GM12878 (cell line): ENCODE measurements at regions of chr11 and their contacts with region 1.

Region 1: DNA sequence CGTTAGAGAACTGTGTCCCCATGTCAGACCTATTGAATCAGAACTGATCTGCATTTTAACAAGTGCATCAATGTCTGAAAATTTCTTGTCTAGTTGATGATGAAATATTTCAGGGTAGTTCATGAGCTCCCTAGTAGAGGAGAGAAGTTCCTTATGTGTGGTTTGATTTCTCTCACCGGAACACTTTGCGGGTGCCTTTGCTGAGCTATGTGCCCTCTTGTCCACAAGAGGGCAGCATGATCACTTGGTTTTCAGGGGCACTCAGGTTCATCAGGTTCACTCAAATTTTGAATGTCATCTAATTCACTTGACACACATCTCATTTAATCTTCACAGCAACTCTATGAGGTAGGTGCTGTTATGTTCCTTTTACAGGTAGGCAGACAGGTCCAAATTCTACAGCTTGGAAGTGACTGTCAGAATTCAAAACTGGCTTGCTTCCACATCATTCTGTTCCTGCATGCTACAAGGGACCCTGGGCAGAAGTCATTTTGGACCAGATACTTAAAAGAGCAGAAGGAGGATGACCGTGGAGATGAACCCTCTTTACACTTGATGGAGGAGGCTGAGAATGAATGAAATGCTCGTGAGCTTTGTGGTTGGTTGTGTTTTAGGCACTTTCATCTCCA is 55.6 kb downstream of the P4HA3 start:
- DNase-seq: no peak
- ATAC-seq: peak; percentile 80
- H3K4me3 ChIP-seq: no peak overlapping the region
- H3K27ac ChIP-seq: no peak overlapping the region
- H3K4me1 ChIP-seq: no peaks in the 10 kb centered on the region
- H3K27me3 ChIP-seq: no peaks in the 10 kb centered on the region
- CTCF ChIP-seq: peak; percentile 87 to 95 (median 89)
- EP300 ChIP-seq: no peak
- POLR2A ChIP-seq: no peak
- RAD21 ChIP-seq: peak; percentile 71

Region 2: DNA sequence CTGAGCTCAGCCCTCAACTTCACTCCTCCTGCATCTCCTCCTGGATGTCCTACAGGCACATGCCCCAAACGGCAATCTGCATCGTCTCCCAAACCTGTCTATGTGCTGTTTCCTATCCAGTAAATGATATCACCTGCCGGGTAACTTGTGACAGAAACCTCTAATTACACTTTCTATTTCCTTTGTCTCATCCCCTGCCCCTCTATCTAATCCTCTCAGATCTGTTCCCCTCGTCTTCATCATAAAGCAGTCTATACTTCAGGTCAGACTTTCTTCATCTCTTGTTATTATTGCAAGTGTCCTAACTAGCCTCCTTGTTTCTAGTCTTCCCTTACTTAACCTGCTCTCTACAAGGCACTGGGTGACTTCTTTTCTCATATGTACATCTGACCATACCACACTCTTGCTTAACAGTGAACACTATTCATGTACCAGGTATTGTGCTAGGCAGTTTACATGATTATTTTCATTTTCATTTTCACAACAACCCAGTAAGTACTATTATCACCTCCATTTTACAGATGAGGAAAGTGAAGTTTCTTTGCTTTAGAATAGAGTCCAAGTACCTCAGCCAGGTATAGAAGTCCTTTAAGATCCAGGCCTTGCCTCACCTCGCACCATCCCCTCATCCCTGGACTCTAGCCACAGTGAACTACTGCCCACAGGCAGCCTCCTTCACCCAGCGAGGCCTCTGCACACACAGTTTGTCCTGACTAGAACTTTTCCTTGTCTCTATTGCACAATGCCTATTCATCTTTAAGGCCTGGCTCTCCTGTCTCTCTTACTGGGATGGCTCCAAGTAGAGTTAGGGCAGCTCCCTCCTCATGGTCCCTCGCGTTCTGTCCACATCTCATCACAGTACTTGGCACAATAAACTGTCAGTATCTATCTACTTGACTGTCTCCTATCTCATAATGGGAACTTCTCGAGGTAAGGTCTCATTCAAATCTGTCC is 224.9 kb before region 1 on chr11:
- CTCF ChIA-PET with region 1: no interaction called
- POLR2A ChIA-PET with region 1: no interaction called
- RAD21 ChIA-PET with region 1: no interaction called
- SMC1A ChIA-PET with region 1: no interaction called
- in situ Hi-C with region 1: no loop called
- intact Hi-C with region 1: no loop called
- DNase-seq: no peak
- ATAC-seq: peak; percentile 69
- H3K4me3 ChIP-seq: no peak overlapping the region
- H3K27ac ChIP-seq: 0 out of 2 replicates have a peak overlapping the region, but pooled peaks have one; percentile 0
- H3K4me1 ChIP-seq: peaks cover 9% of the 10 kb centered on the region
- H3K27me3 ChIP-seq: no peaks in the 10 kb centered on the region
- CTCF ChIP-seq: no peak
- EP300 ChIP-seq: no peak
- POLR2A ChIP-seq: no peak
- RAD21 ChIP-seq: no peak

Region 3: DNA sequence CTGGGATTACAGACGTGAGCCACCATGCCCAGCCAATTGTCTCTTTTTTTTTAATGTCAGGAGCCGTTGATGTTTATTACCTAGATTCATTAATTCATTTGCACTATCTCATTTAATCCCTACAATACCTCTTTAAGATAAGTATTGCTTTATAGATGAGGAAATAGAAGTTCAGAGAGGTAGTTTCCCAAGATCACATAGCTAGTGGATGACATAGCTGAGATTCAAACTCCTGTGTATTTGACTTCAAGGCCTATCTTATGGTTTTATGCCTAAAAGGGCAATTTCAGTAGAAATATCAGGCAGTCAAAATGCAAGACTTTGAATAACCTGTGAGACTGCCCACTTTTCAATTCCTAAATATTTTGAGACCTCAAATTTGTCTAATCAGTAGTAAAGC is 18.3 kb before region 1 on chr11:
- CTCF ChIA-PET with region 1: interaction called, 12 read pairs
- POLR2A ChIA-PET with region 1: no interaction called
- RAD21 ChIA-PET with region 1: interaction called, 3 read pairs
- SMC1A ChIA-PET with region 1: interaction called, 5 read pairs
- in situ Hi-C with region 1: no loop called
- intact Hi-C with region 1: no loop called
- DNase-seq: no peak
- ATAC-seq: no peak
- H3K4me3 ChIP-seq: no peak overlapping the region
- H3K27ac ChIP-seq: no peak overlapping the region
- H3K4me1 ChIP-seq: no peaks in the 10 kb centered on the region
- H3K27me3 ChIP-seq: no peaks in the 10 kb centered on the region
- CTCF ChIP-seq: no peak
- EP300 ChIP-seq: no peak
- POLR2A ChIP-seq: no peak
- RAD21 ChIP-seq: no peak

Region 4: GRCh38 chr11:74269161-74269811 is 13.4 kb after region 1 on chr11:
- CTCF ChIA-PET with region 1: interaction called, 22 read pairs
- POLR2A ChIA-PET with region 1: interaction called, 3 read pairs
- RAD21 ChIA-PET with region 1: no interaction called
- SMC1A ChIA-PET with region 1: interaction called, 5 read pairs
- in situ Hi-C with region 1: no loop called
- intact Hi-C with region 1: no loop called
- DNase-seq: no peak
- ATAC-seq: no peak
- H3K4me3 ChIP-seq: no peak overlapping the region
- H3K27ac ChIP-seq: no peak overlapping the region
- H3K4me1 ChIP-seq: no peaks in the 10 kb centered on the region
- H3K27me3 ChIP-seq: peaks cover 0 to 6% of the 10 kb centered on the region in 2 experiments; a peak in 2 of 4 replicates
- CTCF ChIP-seq: no peak
- EP300 ChIP-seq: no peak
- POLR2A ChIP-seq: no peak
- RAD21 ChIP-seq: no peak

Region 5: GRCh38 chr11:74321487-74322188 is 65.8 kb after region 1 on chr11:
- CTCF ChIA-PET with region 1: interaction called, 23 read pairs
- POLR2A ChIA-PET with region 1: no interaction called
- RAD21 ChIA-PET with region 1: interaction called, 7 read pairs
- SMC1A ChIA-PET with region 1: interaction called, 12 read pairs
- in situ Hi-C with region 1: no loop called
- intact Hi-C with region 1: loop called (anchors 1 kb)
- DNase-seq: no peak
- ATAC-seq: peak; percentile 49; the same call in 2 of the 3 replicates
- H3K4me3 ChIP-seq: no peak overlapping the region
- H3K27ac ChIP-seq: no peak overlapping the region
- H3K4me1 ChIP-seq: no peaks in the 10 kb centered on the region
- H3K27me3 ChIP-seq: 0 out of 4 replicates have a peak, but pooled peaks cover 0 to 3% of the 10 kb centered on the region in 2 experiments
- CTCF ChIP-seq: peak; percentile 49 to 72 (median 61); a peak in 5 of 6 replicates
- EP300 ChIP-seq: no peak
- POLR2A ChIP-seq: no peak
- RAD21 ChIP-seq: peak; percentile 53

Region 6: DNA sequence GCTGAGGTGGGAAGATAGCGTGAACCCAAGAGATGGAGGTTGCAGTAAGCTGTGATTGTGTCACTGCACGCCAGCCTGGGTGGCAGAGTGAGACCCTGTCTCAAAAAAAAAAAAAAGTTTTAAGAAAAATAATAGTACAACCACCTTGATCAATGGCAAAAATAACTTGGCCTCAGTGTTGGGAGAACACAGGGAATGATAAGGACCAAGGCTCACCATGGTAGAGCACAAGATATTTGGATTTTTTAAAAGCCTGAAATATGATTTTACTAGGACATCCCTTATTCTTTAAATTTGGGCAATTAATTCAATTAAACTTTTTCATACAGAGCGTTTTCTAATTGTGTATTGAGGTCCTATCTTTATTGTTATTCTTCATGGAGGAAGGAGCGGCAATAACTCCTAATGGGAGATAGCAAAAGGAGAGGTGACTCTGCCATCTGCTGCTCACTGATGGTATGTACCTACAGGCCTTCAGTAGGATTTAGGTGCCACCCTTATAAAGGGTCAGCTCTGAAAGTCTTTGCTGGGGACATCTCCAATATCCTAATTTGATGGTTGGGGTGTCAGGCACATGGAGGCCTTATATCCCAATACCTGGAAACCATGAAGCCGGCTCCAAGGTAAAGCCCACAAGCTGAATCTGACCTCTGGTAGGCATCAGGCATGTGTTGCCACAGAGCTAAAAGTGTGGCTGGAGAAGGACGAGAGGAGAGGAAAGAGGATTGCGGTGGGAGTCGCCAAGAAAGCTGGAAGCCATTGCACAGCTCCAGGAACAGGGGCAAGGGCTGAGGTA is 314.6 kb after region 1 on chr11:
- CTCF ChIA-PET with region 1: interaction called, 7 read pairs
- POLR2A ChIA-PET with region 1: no interaction called
- RAD21 ChIA-PET with region 1: interaction called, 4 read pairs
- SMC1A ChIA-PET with region 1: interaction called, 5 read pairs
- in situ Hi-C with region 1: no loop called
- intact Hi-C with region 1: loop called (anchors 5 kb)
- DNase-seq: no peak
- ATAC-seq: peak; percentile 88
- H3K4me3 ChIP-seq: no peak overlapping the region
- H3K27ac ChIP-seq: no peak overlapping the region
- H3K4me1 ChIP-seq: no peaks in the 10 kb centered on the region
- H3K27me3 ChIP-seq: no peaks in the 10 kb centered on the region
- CTCF ChIP-seq: peak; percentile 52 to 76 (median 62); a peak in 5 of 6 replicates
- EP300 ChIP-seq: no peak
- POLR2A ChIP-seq: no peak
- RAD21 ChIP-seq: peak; percentile 74

Region 7: DNA sequence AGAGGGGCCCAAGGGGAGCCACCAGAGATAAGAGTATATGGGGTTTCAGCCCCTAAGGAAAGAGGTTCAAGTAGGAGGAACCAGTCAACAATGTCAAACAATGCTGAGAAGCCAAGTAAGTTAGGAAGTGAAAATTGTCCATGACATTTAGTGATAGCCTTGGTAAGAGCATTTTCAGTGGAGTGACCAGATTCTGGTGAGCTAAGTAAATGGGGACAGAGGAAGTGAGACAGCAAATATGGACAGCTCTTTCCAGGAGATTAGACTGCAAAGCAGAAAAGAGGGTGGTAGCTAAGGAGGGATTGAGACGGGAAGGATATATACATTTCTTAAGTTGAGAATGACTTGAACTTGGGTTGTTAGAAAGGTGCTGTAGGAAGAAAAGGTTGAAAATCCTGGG is 359.5 kb after region 1 on chr11:
- CTCF ChIA-PET with region 1: no interaction called
- POLR2A ChIA-PET with region 1: no interaction called
- RAD21 ChIA-PET with region 1: no interaction called
- SMC1A ChIA-PET with region 1: no interaction called
- in situ Hi-C with region 1: no loop called
- intact Hi-C with region 1: no loop called
- DNase-seq: no peak
- ATAC-seq: no peak
- H3K4me3 ChIP-seq: no peak overlapping the region
- H3K27ac ChIP-seq: no peak overlapping the region
- H3K4me1 ChIP-seq: no peaks in the 10 kb centered on the region
- H3K27me3 ChIP-seq: no peaks in the 10 kb centered on the region
- CTCF ChIP-seq: no peak
- EP300 ChIP-seq: no peak
- POLR2A ChIP-seq: no peak
- RAD21 ChIP-seq: no peak

Region 8: GRCh38 chr11:74634537-74634936 is 378.7 kb after region 1 on chr11:
- CTCF ChIA-PET with region 1: no interaction called
- POLR2A ChIA-PET with region 1: no interaction called
- RAD21 ChIA-PET with region 1: no interaction called
- SMC1A ChIA-PET with region 1: no interaction called
- in situ Hi-C with region 1: no loop called
- intact Hi-C with region 1: no loop called
- DNase-seq: no peak
- ATAC-seq: no peak
- H3K4me3 ChIP-seq: no peak overlapping the region
- H3K27ac ChIP-seq: no peak overlapping the region
- H3K4me1 ChIP-seq: peaks cover 13% of the 10 kb centered on the region
- H3K27me3 ChIP-seq: no peaks in the 10 kb centered on the region
- CTCF ChIP-seq: peak in 1 of 3 experiments; percentile 12; a peak in 1 of 6 replicates
- EP300 ChIP-seq: no peak
- POLR2A ChIP-seq: no peak
- RAD21 ChIP-seq: no peak

Region 9: GRCh38 chr11:75907906-75908527 is 1652.2 kb after region 1 on chr11:
- CTCF ChIA-PET with region 1: no interaction called
- POLR2A ChIA-PET with region 1: no interaction called
- RAD21 ChIA-PET with region 1: no interaction called
- SMC1A ChIA-PET with region 1: no interaction called
- in situ Hi-C with region 1: no loop called
- intact Hi-C with region 1: no loop called
- DNase-seq: no peak
- ATAC-seq: peak; percentile 64
- H3K4me3 ChIP-seq: peak overlapping the region; percentile 22; the same call in 1 of the 2 replicates
- H3K27ac ChIP-seq: peak overlapping the region; percentile 45; the same call in 1 of the 2 replicates
- H3K4me1 ChIP-seq: peaks cover 28% of the 10 kb centered on the region
- H3K27me3 ChIP-seq: no peaks in the 10 kb centered on the region
- CTCF ChIP-seq: no peak
- EP300 ChIP-seq: no peak
- POLR2A ChIP-seq: no peak
- RAD21 ChIP-seq: no peak